Panc1 (cell line): ENCODE measurements at regions of chr3 and their contacts with region 1.

Region 1: DNA sequence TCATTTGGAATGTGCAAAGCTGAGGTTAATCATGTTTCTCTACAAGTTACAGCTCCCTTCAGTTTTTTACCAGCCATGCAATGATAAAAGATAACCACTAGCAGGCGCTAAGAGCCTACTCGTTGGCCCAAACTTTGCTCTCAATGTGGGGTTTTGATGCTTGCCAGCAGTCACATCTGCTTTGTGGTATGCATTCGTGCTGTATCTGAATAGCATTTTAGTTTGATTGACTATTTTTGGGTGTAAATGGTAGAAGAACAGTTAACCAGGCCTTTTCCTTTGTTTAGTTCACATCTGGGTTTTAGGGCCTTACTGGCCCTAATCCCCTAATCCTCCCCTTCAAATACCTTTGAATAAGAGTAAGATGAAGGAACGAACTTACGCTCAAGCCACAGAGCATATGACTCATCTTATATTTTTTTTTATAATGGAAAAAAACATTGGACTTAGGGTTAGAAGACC is 4.4 kb upstream of the CLDN11 start:
- DNase-seq: peak; percentile 68
- ATAC-seq: peak; percentile 61
- H3K4me3 ChIP-seq: no peak overlapping the region
- H3K27ac ChIP-seq: no peak overlapping the region
- H3K4me1 ChIP-seq: no peaks in the 10 kb centered on the region
- H3K27me3 ChIP-seq: no peaks in the 10 kb centered on the region
- CTCF ChIP-seq: peak; percentile 99

Region 2: GRCh38 chr3:170055209-170055608 is 359.0 kb before region 1 on chr3:
- CTCF ChIA-PET with region 1: no interaction called
- POLR2A ChIA-PET with region 1: no interaction called
- in situ Hi-C with region 1: no loop called
- intact Hi-C with region 1: no loop called
- DNase-seq: no peak
- ATAC-seq: no peak
- H3K4me3 ChIP-seq: no peak overlapping the region
- H3K27ac ChIP-seq: no peak overlapping the region
- H3K4me1 ChIP-seq: no peaks in the 10 kb centered on the region
- H3K27me3 ChIP-seq: peaks cover 5% of the 10 kb centered on the region; the same call in 1 of the 2 replicates
- CTCF ChIP-seq: no peak

Region 3: DNA sequence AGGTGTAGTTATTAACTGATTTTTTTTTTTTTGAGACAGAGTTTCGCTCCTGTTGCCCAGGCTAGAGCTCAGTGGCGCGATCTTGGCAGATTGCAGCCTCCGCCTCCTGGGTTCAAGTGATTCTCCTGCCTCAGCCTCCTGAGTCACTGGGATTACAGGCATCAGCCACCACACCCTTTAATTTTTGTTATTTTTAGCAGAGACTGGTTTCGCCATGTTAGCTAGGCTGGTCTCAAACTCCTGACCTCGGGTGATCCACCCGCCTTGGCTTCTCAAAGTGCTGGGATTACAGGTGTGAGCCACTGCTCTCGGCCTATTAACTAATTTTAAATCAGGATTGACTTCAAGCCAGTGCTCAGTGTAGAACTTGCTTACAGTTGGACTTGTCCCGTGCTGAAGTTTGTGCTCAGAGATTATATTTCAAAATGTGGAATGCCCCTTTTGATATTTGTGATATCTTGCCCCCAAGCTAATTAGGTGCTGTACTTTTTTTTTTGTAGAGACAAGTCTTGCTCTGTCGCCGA is 50.7 kb before region 1 on chr3:
- CTCF ChIA-PET with region 1: interaction called, 11 read pairs
- POLR2A ChIA-PET with region 1: no interaction called
- in situ Hi-C with region 1: no loop called
- intact Hi-C with region 1: no loop called
- DNase-seq: no peak
- ATAC-seq: no peak
- H3K4me3 ChIP-seq: no peak overlapping the region
- H3K27ac ChIP-seq: no peak overlapping the region
- H3K4me1 ChIP-seq: peaks cover 22% of the 10 kb centered on the region
- H3K27me3 ChIP-seq: no peaks in the 10 kb centered on the region
- CTCF ChIP-seq: no peak

Region 4: GRCh38 chr3:170442947-170443346 is 28.7 kb after region 1 on chr3:
- CTCF ChIA-PET with region 1: interaction called, 14 read pairs
- POLR2A ChIA-PET with region 1: no interaction called
- in situ Hi-C with region 1: no loop called
- intact Hi-C with region 1: no loop called
- DNase-seq: no peak
- ATAC-seq: no peak
- H3K4me3 ChIP-seq: no peak overlapping the region
- H3K27ac ChIP-seq: no peak overlapping the region
- H3K4me1 ChIP-seq: no peaks in the 10 kb centered on the region
- H3K27me3 ChIP-seq: peaks cover 2% of the 10 kb centered on the region; the same call in 1 of the 2 replicates
- CTCF ChIP-seq: no peak

Region 5: GRCh38 chr3:170584585-170585007 is 170.4 kb after region 1 on chr3:
- CTCF ChIA-PET with region 1: no interaction called
- POLR2A ChIA-PET with region 1: no interaction called
- in situ Hi-C with region 1: no loop called
- intact Hi-C with region 1: no loop called
- DNase-seq: no peak
- ATAC-seq: no peak; the same call in 1 of the 2 replicates
- H3K4me3 ChIP-seq: no peak overlapping the region
- H3K27ac ChIP-seq: no peak overlapping the region
- H3K4me1 ChIP-seq: no peaks in the 10 kb centered on the region
- H3K27me3 ChIP-seq: peaks cover 3% of the 10 kb centered on the region; the same call in 1 of the 2 replicates
- CTCF ChIP-seq: no peak

Region 6: GRCh38 chr3:170811928-170812591 is 397.8 kb after region 1 on chr3:
- CTCF ChIA-PET with region 1: interaction called, 52 read pairs
- POLR2A ChIA-PET with region 1: no interaction called
- in situ Hi-C with region 1: no loop called
- intact Hi-C with region 1: loop called (anchors 1 kb)
- DNase-seq: peak; percentile 73
- ATAC-seq: peak; percentile 82
- H3K4me3 ChIP-seq: no peak overlapping the region
- H3K27ac ChIP-seq: no peak overlapping the region
- H3K4me1 ChIP-seq: peaks cover 7% of the 10 kb centered on the region; the same call in 1 of the 2 replicates
- H3K27me3 ChIP-seq: no peaks in the 10 kb centered on the region
- CTCF ChIP-seq: peak; percentile 95